WTC11 (cell line): ENCODE measurements at regions of chr3 and their contacts with region 1.

Region 1: DNA sequence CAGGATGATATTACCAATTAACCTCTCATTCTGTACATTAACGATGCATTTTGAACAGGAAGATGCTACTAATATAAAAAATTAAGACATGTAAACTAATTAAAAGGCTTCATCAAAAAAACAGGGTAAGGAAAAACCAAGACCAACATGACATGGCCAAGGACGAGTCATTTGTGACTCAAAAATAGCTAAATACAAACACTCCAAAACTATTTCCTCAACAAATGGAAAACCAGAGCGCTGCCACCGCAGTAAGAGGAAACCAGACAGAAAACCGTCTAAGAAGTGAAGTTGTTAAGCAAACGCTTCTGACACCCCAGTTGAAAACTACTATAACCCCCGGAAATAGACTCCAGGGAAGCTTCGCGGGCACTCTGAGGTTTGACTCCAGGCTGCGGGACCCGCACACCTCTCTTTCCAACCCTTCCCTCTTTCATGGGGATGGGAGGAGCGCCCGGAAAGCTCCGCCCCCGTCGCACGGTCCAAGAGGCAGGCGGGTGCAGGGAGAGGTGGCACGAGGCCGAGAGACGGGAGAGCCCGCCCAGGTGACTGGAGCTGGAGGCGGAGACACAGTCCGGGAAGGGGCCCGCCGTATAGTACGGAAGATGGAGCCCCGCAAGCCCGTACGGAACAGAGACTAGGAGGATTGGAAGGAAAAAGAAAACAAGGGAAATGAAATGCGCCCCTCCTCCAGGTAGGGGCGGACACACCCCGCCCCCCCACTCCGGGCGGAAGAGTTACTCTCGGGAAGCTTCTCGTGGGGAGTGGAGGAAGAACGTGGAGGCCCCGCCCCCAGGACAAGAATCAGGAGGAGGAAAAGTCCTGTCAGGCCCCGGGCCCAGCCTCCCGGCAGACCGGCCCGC is 708 bp downstream of the DCAF1 start:
- DNase-seq: peak; percentile 97
- ATAC-seq: peak; percentile 85
- H3K4me3 Mint-ChIP-seq: peak overlapping the region; percentile 94
- H3K27ac Mint-ChIP-seq: peak overlapping the region; percentile 97
- H3K4me1 Mint-ChIP-seq: 0 out of 2 replicates have a peak, but pooled peaks cover 5% of the 10 kb centered on the region
- H3K27me3 Mint-ChIP-seq: no peaks in the 10 kb centered on the region
- CTCF ChIP-seq: no peak

Region 2: DNA sequence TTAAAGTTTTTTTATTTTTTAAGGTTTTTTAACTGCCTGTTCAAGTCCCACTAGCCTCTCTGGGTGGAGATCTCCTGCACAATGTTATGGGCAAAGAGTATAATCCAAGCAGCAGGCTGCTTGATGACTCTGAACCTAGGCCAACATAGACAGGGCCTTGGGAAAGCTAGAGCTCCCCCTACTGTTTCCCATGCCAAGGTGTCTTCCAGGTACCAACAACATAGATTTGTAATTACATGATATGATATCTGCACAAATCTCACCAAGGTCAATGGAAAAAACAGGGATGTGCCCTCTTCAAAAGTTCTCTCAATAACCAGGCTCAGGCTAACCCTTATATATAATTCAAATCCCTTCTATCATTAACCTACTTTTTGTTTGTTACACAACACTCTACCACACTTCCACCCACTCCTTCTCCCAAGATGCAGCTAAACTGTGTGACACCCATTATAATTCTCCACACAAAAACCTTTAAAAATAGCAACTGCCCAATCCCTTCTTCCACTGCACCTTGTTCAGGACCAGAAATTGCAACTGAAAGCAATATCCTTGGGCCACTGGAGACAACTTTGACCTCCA is 64.3 kb before region 1 on chr3:
- CTCF ChIA-PET with region 1: interaction called, 14 read pairs
- POLR2A ChIA-PET with region 1: interaction called, 3 read pairs
- DNase-seq: peak; percentile 30
- ATAC-seq: peak; percentile 95
- H3K4me3 Mint-ChIP-seq: no peak overlapping the region
- H3K27ac Mint-ChIP-seq: no peak overlapping the region
- H3K4me1 Mint-ChIP-seq: no peaks in the 10 kb centered on the region
- H3K27me3 Mint-ChIP-seq: no peaks in the 10 kb centered on the region
- CTCF ChIP-seq: peak; percentile 49; the same call in 1 of the 2 replicates

Region 3: GRCh38 chr3:51530490-51530889 is 31.4 kb after region 1 on chr3:
- CTCF ChIA-PET with region 1: interaction called, 5 read pairs
- POLR2A ChIA-PET with region 1: interaction called, 13 read pairs
- DNase-seq: no peak
- ATAC-seq: no peak
- H3K4me3 Mint-ChIP-seq: no peak overlapping the region
- H3K27ac Mint-ChIP-seq: no peak overlapping the region
- H3K4me1 Mint-ChIP-seq: no peaks in the 10 kb centered on the region
- H3K27me3 Mint-ChIP-seq: peaks cover 3% of the 10 kb centered on the region; the same call in 1 of the 2 replicates
- CTCF ChIP-seq: no peak

Region 4: GRCh38 chr3:51568036-51568435 is 68.9 kb after region 1 on chr3:
- CTCF ChIA-PET with region 1: interaction called, 11 read pairs
- POLR2A ChIA-PET with region 1: no interaction called
- DNase-seq: no peak
- ATAC-seq: no peak
- H3K4me3 Mint-ChIP-seq: no peak overlapping the region
- H3K27ac Mint-ChIP-seq: no peak overlapping the region
- H3K4me1 Mint-ChIP-seq: peaks cover 19% of the 10 kb centered on the region
- H3K27me3 Mint-ChIP-seq: no peaks in the 10 kb centered on the region
- CTCF ChIP-seq: no peak

Region 5: DNA sequence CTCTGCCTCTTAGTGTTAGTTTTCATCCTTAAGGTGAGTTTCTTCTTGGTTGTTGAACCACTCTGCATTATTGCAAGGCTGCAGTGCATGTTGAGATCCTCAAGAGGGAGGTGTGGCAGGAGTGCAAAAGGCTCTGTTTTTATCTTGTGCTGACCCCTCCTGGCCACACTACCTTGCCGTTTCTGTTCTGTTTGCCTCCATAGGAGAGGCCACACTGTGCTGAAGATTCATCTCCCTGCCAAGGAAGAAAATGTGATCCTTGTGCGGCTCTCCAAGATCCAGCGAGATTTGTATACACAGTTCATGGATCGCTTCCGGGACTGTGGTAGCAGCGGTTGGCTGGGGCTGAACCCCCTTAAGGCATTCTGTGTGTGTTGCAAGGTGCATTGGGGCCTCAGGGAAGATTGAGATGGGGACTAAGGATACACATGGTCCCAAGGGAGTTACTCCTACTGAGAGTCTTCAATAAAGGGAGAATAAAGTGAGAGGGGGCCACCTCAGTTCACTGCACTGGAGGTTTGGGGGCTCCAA is 138.9 kb after region 1 on chr3:
- CTCF ChIA-PET with region 1: interaction called, 11 read pairs
- POLR2A ChIA-PET with region 1: interaction called, 12 read pairs
- DNase-seq: peak; percentile 72
- ATAC-seq: peak; percentile 98
- H3K4me3 Mint-ChIP-seq: no peak overlapping the region
- H3K27ac Mint-ChIP-seq: peak overlapping the region; percentile 69
- H3K4me1 Mint-ChIP-seq: no peaks in the 10 kb centered on the region
- H3K27me3 Mint-ChIP-seq: no peaks in the 10 kb centered on the region
- CTCF ChIP-seq: peak; percentile 72

Region 6: DNA sequence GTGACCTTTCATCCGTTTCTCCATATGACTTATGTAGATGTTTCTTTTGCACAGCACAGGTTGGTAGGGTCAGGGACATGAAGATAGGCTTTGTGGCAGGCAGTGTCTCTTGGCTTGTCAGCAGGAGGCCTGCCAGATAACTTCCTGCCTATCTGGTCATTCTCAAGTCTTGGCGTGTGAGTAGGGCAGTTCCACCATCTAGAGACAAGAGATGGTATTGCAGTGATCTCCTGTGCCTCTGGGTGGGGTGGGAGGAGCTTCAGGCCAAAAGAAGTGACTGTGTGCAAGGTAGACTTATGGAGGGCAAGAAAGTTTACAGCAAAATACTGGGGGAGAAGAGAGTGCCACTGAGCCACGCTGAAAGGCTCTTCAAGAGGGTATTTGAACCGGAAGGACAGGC is 183.0 kb after region 1 on chr3:
- CTCF ChIA-PET with region 1: interaction called, 110 read pairs
- POLR2A ChIA-PET with region 1: interaction called, 11 read pairs
- DNase-seq: peak; percentile 72
- ATAC-seq: peak; percentile 91
- H3K4me3 Mint-ChIP-seq: no peak overlapping the region
- H3K27ac Mint-ChIP-seq: peak overlapping the region; percentile 72; the same call in 1 of the 2 replicates
- H3K4me1 Mint-ChIP-seq: peaks cover 18% of the 10 kb centered on the region
- H3K27me3 Mint-ChIP-seq: no peaks in the 10 kb centered on the region
- CTCF ChIP-seq: peak; percentile 70